ENCODE measurements at regions of chr18 and their contacts with region 1.

Region 1: GRCh38 chr18:76803814-76804213 is 18.5 kb upstream of the ZNF236 start:
- DNase-seq: peak in 6 of 10 donors; percentile 30 to 64 (median 58)
- H3K4me3 ChIP-seq: peak overlapping the region in 11 of 59 donors; percentile 5 to 35 (median 16)
- H3K27ac ChIP-seq: no peak overlapping the region
- H3K27me3 ChIP-seq: no peaks in the 10 kb centered on the region
- CTCF ChIP-seq: peak; percentile 56 to 85 (median 74)

Region 2: GRCh38 chr18:76822510-76823160 is 18.8 kb after region 1 on chr18 and contains the start of gene ZNF236:
- intact Hi-C with region 1: loop called in 1 of 2 experiments (anchors 2 kb)
- DNase-seq: peak in 8 of 10 donors; percentile 41 to 77 (median 56)
- H3K4me3 ChIP-seq: peak within 1 kb of the TSS; percentile 74 to 99 (median 92)
- H3K27ac ChIP-seq: peak within 1 kb of the TSS; percentile 87 to 99 (median 95)
- H3K27me3 ChIP-seq: no peaks in the 10 kb centered on the region
- CTCF ChIP-seq: no peak
- total RNA-seq, gene ZNF236: 29.4 to 62.0 (median 40.2) TPM

Region 3: GRCh38 chr18:76914314-76914713 is 110.5 kb after region 1 on chr18:
- intact Hi-C with region 1: loop called in 1 of 2 experiments (anchors 10 kb)
- DNase-seq: no peak
- H3K4me3 ChIP-seq: no peak overlapping the region
- H3K27ac ChIP-seq: no peak overlapping the region
- H3K27me3 ChIP-seq: no peaks in the 10 kb centered on the region
- CTCF ChIP-seq: no peak

Region 4: GRCh38 chr18:77061946-77062517 is 258.2 kb after region 1 on chr18:
- intact Hi-C with region 1: loop called in 1 of 2 experiments (anchors 5 kb)
- DNase-seq: peak in 2 of 10 donors; percentile 64 to 73
- H3K4me3 ChIP-seq: no peak overlapping the region
- H3K27ac ChIP-seq: peak overlapping the region in 40 of 59 donors; percentile 0 to 83 (median 40)
- H3K27me3 ChIP-seq: no peaks in the 10 kb centered on the region
- CTCF ChIP-seq: peak in 54 of 56 donors; percentile 17 to 77 (median 53)

Region 5: DNA sequence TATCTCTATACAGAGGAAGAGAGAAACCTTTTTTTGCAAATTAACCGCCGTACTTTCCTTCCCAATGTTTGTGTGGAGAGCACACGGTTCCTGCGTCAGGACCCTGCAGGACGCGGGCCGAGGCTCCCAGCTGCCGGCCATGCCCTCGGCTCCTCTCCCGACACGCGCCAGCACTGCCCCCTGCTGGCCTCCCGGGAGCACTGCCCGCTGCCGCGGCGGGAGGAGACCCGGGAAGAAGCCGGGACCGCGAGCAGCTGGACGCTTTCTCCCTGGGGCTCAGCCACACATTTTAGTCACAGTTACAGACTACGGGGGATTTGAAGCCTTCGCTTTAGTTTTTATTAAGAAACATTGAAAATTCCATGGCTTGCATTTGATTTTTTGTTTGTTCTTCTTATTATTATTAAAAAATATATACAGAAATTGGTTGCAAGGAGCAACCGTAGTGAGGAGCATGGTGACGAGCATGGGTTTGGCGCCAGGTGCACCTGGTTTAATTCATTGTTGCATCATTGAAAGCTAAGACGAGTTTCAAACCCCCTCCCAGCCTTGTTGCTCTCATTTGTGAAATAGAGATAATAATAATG is 847.1 kb after region 1 on chr18:
- intact Hi-C with region 1: loop called in 1 of 2 experiments (anchors 10 kb)
- DNase-seq: peak; percentile 29 to 90 (median 64)
- H3K4me3 ChIP-seq: peak overlapping the region in 39 of 59 donors; percentile 1 to 50 (median 23)
- H3K27ac ChIP-seq: no peak overlapping the region
- H3K27me3 ChIP-seq: peaks cover 0 to 5% (median 0%) of the 10 kb centered on the region in 45 donors
- CTCF ChIP-seq: peak; percentile 70 to 99 (median 95)

Measured in dorsolateral prefrontal cortex (tissue), 120 donors.